ENCODE measurements at regions of chr4 and their contacts with region 1.

Region 1: GRCh38 chr4:141654098-141654497 is 17.7 kb downstream of the IL15 start:
- DNase-seq: no peak

Region 2: DNA sequence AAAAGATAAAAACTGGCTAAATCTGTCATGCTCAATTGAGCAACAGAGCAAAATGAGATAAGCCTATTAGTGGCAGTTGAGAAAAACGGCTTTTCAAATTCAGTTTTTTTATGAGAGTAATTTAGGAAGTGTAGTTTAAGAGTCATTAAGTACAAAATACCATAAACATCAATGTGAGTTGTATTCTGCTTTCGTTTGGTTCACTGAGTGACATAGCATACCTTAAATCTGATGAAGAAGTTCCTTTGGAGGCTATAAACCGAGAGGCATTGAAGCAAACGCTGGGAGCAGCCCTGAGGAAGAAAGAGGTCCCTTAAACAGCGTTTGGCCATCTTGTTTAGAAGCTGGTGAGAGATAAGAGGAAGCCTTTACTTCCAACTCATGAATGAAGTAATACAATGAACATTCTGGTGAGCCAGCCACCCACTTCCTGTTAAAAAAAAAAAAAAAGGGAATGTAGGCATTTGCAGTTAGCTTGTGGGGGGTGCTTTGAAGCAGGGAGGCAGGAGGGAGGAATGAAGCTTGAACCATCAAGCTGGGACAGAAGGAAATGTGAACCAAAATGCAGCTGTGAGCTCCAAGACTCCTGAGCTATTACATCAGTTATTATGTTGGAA is 301.1 kb before region 1 on chr4:
- intact Hi-C with region 1: loop called in 1 of 2 experiments (anchors 2 kb)
- DNase-seq: no peak